ENCODE measurements at regions of chr7 and their contacts with region 1.

Region 1: DNA sequence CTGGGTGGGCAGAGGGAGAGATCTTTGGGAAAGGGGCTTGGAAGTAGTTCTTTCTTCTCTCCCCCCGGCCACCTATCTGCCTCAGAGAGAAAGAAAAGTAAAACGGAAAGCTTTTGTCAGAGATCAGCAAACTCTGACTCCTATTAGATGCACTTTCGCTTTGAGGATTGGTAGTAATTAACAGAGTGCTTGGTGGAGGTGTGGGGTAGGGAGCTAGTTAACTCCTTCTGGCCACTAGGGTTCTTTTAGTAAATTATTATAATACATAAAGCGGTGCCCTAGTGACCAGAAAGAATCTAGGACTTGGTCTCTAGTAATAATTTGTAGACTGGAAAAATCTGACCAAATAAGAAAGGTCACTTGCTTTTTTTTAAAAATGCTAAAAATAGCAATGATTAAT is 54.6 kb downstream of the CPVL start:
- DNase-seq: no peak
- H3K4me3 ChIP-seq: no peak overlapping the region
- H3K27ac ChIP-seq: no peak overlapping the region
- H3K4me1 ChIP-seq: peaks cover 0 to 2% (median 0%) of the 10 kb centered on the region in 4 experiments; a peak in 2 of 7 replicates
- H3K27me3 ChIP-seq: no peaks in the 10 kb centered on the region
- CTCF ChIP-seq: no peak
- EP300 ChIP-seq: no peak
- POLR2A ChIP-seq: no peak
- RAD21 ChIP-seq: no peak

Region 2: DNA sequence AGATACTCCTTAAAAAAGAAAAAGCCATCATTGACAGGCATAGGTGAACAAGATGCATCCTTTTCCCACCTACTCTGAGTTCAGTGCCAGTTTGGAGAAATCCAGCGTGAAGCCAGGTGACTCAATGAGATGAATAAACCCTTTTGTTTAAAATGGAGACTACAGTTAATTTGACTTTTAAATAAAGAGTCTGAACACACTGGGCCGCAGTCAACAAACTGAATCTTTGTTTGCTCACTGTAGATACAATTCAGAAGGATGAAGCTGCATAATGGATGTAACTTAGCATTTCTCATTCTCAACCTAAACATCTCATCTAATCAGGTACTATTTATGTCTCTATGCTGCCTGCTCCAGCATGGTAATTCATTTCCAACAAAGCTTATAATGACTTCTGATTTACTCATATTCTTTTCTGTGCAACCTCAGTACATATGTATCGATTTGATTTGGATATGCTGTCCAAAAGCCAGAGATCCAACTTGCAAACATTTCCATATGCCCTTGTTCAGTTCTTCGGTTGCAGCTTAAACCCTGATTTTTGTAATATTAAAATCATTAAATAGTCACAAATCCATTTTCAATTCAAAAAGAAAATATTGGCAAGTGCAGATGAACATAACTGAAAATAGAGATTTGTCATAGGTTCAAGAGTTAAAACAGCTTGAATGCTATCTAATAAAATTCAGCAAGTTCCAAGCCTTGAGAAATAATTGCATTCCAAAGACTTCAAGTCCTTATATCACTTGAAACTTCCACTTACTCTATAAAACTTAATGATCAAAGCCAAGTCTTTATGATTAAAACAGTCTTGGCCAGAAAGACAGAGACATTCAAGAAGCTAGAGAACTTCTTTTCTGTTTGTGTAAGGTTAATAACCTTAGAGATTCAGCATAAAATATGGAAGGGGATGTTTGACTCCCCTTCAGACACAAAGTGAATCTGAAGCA is 13.1 kb before region 1 on chr7:
- CTCF ChIA-PET with region 1: interaction called, 14 read pairs
- POLR2A ChIA-PET with region 1: interaction called, 3 read pairs
- DNase-seq: no peak
- H3K4me3 ChIP-seq: no peak overlapping the region
- H3K27ac ChIP-seq: no peak overlapping the region
- H3K4me1 ChIP-seq: no peaks in the 10 kb centered on the region
- H3K27me3 ChIP-seq: no peaks in the 10 kb centered on the region
- CTCF ChIP-seq: no peak
- EP300 ChIP-seq: no peak
- POLR2A ChIP-seq: no peak
- RAD21 ChIP-seq: no peak

Region 3: DNA sequence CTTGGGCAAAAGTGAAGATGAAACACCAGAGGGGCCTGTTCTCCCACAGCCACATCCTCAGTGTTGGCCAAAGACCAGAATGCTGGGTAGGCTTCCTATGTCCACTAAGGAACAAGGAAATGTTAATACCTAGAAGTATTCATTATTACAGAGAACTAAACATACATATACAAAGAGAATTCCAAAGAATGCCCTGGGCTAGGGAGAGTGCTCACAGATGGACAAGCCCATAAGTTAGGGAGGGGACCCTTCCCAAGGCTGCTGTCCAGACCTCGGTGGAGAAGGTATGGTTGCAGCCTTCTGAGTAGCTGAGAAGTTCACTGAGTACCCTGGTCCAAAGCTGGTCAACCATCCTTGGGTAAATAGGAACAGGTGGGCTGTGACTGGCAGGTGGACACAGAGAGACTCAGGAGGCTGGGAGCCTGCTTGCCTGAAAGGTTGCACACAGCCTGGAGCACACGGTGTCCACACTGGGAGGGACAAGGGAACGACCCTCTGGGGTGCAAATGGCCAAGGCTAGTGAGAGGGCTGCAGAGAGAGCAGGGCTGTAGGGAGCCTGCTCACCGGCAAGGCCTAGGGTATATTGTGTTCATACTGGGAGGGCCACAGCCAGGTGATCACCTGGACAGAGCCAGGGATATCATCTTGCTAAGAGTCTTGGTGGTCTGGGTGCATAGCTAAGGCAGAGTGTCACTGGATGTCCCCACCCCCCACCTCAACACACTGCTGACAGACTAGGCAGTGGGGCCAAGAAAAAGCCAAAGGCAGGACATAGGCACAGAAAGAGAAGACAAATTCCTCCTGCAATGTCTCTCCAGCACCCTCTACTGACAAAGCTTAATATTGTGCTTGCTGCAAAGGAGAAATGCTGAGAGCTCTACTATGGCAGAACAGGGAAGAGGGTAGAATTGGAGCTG is 14.3 kb after region 1 on chr7:
- CTCF ChIA-PET with region 1: interaction called, 22 read pairs
- POLR2A ChIA-PET with region 1: no interaction called
- DNase-seq: peak in 1 of 2 experiments; percentile 21
- H3K4me3 ChIP-seq: no peak overlapping the region
- H3K27ac ChIP-seq: no peak overlapping the region
- H3K4me1 ChIP-seq: no peaks in the 10 kb centered on the region
- H3K27me3 ChIP-seq: no peaks in the 10 kb centered on the region
- CTCF ChIP-seq: peak in 2 of 3 experiments; percentile 89 to 90; a peak in 3 of 4 replicates
- EP300 ChIP-seq: no peak
- POLR2A ChIP-seq: no peak
- RAD21 ChIP-seq: peak; percentile 94 to 95

Measured in H1 (cell line).